ENCODE measurements at regions of chr1 and their contacts with region 1.

Region 1: GRCh38 chr1:210584439-210585113 is 255.9 kb downstream of the HHAT start:
- DNase-seq: peak; percentile 77
- H3K4me3 ChIP-seq: no peak overlapping the region
- H3K27ac ChIP-seq: no peak overlapping the region
- H3K4me1 ChIP-seq: no peaks in the 10 kb centered on the region
- H3K27me3 ChIP-seq: no peaks in the 10 kb centered on the region
- CTCF ChIP-seq: peak; percentile 50

Region 2: GRCh38 chr1:210159206-210159605 is 425.4 kb before region 1 on chr1:
- intact Hi-C with region 1: loop called (anchors 5 kb)
- DNase-seq: no peak
- H3K4me3 ChIP-seq: no peak overlapping the region
- H3K27ac ChIP-seq: no peak overlapping the region
- H3K4me1 ChIP-seq: no peaks in the 10 kb centered on the region
- H3K27me3 ChIP-seq: no peaks in the 10 kb centered on the region
- CTCF ChIP-seq: no peak

Region 3: DNA sequence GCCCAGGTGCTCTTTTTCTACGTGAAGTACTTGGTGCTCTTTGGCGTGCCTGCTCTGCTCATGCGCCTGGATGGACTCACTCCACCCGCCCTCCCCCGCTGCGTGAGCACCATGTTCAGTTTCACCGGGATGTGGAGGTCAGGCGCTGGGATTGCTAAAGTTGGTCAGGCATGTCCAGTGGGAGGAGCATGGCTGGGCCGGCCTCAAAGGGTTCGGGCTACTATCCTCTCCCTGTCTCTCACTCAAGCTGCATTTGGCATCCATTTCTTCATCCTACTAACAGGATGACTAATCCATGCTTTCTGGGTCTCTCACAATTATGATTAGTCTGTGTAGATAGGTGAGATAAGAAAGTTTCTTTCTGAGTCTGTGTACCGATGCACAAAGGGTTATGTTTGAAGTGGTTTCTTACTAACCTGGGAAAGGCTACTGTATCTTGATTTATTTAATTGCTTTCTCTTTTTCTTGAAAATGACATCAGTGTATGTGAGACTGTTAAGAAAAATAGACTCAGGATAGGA is 120.0 kb before region 1 on chr1:
- intact Hi-C with region 1: no loop called
- DNase-seq: no peak
- H3K4me3 ChIP-seq: no peak overlapping the region
- H3K27ac ChIP-seq: no peak overlapping the region
- H3K4me1 ChIP-seq: no peaks in the 10 kb centered on the region
- H3K27me3 ChIP-seq: no peaks in the 10 kb centered on the region
- CTCF ChIP-seq: no peak

Region 4: DNA sequence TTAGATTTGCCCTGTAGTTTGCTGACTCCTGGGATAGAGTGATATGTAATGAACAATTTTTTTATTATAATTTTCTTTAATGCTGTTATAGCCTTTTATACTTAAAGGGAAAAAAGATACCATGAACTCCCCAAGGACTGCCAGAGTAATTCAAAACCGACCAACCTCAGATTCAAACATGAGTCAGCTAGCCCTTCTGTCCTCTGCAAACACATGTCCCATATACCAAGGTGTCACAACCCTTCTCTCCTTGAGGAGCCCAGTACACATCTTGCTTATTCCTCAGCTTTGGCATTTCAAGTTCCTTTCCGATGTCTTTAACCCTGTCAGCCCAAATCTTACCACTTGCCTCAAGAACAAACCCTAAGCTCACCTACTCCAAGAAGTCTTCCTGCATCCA is 364.5 kb after region 1 on chr1:
- intact Hi-C with region 1: loop called (anchors 5 kb)
- DNase-seq: no peak
- H3K4me3 ChIP-seq: no peak overlapping the region
- H3K27ac ChIP-seq: no peak overlapping the region
- H3K4me1 ChIP-seq: no peaks in the 10 kb centered on the region
- H3K27me3 ChIP-seq: no peaks in the 10 kb centered on the region
- CTCF ChIP-seq: no peak

Measured in colonic mucosa (tissue), 4 donors.